ENCODE measurements at regions of chr5 and their contacts with region 1.

Region 1: GRCh38 chr5:123423278-123424149 is at the start of gene CEP120:
- DNase-seq: peak; percentile 99
- ATAC-seq: peak; percentile 97
- H3K4me3 Mint-ChIP-seq: no peak within 1 kb of the TSS
- H3K27ac Mint-ChIP-seq: no peak within 1 kb of the TSS
- H3K4me1 Mint-ChIP-seq: peaks cover 25% of the 10 kb centered on the region
- H3K27me3 Mint-ChIP-seq: no peaks in the 10 kb centered on the region
- total RNA-seq, gene CEP120: 29.4 to 32.1 TPM

Region 2: DNA sequence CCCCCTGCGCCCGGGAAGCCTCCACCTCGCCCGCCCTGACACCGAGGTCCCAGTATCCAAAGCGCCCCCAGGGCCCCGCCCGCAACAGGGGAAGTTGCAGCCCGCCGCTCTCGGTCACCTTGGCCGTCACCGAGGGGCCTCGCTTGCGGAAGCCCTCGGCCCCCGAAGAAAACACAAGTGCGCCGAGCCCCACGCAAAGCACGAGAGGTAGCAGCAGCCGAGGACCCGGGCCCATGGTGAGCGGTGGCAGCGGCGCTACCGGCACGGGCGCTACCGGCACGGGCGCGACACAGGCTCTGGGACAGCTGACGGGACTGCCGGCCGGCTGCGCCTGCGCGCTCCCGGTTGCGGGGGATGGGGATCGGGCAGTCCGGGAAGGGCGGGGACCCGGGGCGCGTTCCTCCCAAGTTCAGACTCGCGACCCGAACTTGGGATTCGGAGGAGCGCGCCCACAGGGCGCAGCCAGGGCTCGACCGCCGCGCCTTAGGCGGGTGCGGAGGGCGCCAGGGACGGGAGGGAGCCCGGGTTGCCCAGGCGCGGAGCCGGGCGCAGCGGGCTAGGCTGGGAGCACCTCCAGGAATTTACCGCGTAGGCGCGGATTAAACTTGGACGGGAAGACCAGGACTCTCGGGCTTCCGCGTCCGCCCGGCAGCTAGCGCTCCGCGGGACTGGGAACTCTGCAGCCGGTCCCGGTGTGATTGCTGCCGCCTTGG is 387.0 kb before region 1 on chr5 and contains the start of gene PPIC:
- CTCF ChIA-PET with region 1: no interaction called
- DNase-seq: no peak
- ATAC-seq: peak; percentile 64
- H3K4me3 Mint-ChIP-seq: peak within 1 kb of the TSS; percentile 53
- H3K27ac Mint-ChIP-seq: no peak within 1 kb of the TSS
- H3K4me1 Mint-ChIP-seq: peaks cover 11% of the 10 kb centered on the region
- H3K27me3 Mint-ChIP-seq: peaks cover 61% of the 10 kb centered on the region
- total RNA-seq, gene PPIC: not detected

Region 3: DNA sequence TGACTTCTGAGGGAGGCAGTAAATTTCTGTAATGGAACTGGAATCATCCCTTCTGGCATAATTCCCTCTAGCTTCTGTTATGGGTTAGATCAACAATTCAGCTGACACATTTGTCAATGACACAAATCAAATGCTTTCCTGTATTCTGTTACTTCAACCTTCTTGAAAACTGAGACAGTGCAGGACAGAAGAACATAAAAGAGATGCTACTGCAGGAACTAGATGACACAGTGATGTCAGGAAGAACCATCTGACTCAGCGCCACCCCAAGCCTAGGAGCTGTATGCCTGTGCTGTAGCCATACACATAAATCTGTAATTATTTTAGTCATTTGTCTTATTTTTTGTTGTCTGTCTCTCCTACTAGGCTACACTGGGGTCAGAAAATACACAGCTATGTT is 17.9 kb after region 1 on chr5:
- CTCF ChIA-PET with region 1: interaction called, 31 read pairs
- DNase-seq: peak; percentile 80
- ATAC-seq: peak; percentile 92
- H3K4me3 Mint-ChIP-seq: no peak overlapping the region
- H3K27ac Mint-ChIP-seq: peak overlapping the region; percentile 63
- H3K4me1 Mint-ChIP-seq: peaks cover 28% of the 10 kb centered on the region
- H3K27me3 Mint-ChIP-seq: peaks cover 5% of the 10 kb centered on the region

Region 4: DNA sequence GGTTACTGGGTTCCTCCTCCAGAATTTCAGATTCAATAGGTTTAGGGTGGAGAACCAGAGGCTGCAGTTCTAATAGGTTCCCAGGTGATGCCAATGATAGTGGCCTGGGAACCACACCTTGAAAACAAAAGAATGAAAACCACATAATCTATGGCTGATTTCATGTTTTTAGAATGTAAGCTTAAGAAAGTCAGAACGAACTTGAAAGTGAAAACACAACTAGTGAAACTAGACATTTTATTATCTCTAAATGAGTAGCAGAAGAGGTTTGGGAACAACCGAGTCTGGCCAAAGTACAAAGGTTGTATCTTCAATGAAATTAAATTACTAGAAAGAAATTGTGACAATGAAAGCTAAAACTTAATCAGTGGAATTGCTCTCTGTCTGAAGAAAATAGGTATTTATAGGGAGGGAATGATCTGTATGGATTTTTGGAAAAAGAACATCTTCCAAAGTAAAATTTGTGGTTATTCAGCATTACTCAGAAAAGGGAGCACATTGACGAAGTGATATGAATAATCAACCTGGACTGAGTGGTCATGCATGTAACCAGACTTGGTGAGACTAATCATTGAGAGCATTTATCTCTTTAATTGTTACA is 24.6 kb after region 1 on chr5:
- CTCF ChIA-PET with region 1: interaction called, 31 read pairs
- DNase-seq: no peak
- ATAC-seq: peak; percentile 89
- H3K4me3 Mint-ChIP-seq: peak overlapping the region; percentile 35
- H3K27ac Mint-ChIP-seq: peak overlapping the region; percentile 63
- H3K4me1 Mint-ChIP-seq: peaks cover 22% of the 10 kb centered on the region
- H3K27me3 Mint-ChIP-seq: peaks cover 18% of the 10 kb centered on the region

Region 5: GRCh38 chr5:123511648-123512605 is 88.4 kb after region 1 on chr5 and contains the start of gene CSNK1G3:
- CTCF ChIA-PET with region 1: interaction called, 42 read pairs
- DNase-seq: peak; percentile 98
- ATAC-seq: peak; percentile 96
- H3K4me3 Mint-ChIP-seq: peak within 1 kb of the TSS; percentile 84
- H3K27ac Mint-ChIP-seq: peak within 1 kb of the TSS; percentile 97
- H3K4me1 Mint-ChIP-seq: peaks cover 46% of the 10 kb centered on the region
- H3K27me3 Mint-ChIP-seq: peaks cover 5% of the 10 kb centered on the region
- total RNA-seq, gene CSNK1G3: 26.3 to 33.4 TPM

Region 6: GRCh38 chr5:123527190-123527589 is 103.7 kb after region 1 on chr5:
- CTCF ChIA-PET with region 1: no interaction called
- DNase-seq: no peak
- ATAC-seq: no peak
- H3K4me3 Mint-ChIP-seq: no peak overlapping the region
- H3K27ac Mint-ChIP-seq: no peak overlapping the region
- H3K4me1 Mint-ChIP-seq: peaks cover 14% of the 10 kb centered on the region
- H3K27me3 Mint-ChIP-seq: no peaks in the 10 kb centered on the region

Region 7: DNA sequence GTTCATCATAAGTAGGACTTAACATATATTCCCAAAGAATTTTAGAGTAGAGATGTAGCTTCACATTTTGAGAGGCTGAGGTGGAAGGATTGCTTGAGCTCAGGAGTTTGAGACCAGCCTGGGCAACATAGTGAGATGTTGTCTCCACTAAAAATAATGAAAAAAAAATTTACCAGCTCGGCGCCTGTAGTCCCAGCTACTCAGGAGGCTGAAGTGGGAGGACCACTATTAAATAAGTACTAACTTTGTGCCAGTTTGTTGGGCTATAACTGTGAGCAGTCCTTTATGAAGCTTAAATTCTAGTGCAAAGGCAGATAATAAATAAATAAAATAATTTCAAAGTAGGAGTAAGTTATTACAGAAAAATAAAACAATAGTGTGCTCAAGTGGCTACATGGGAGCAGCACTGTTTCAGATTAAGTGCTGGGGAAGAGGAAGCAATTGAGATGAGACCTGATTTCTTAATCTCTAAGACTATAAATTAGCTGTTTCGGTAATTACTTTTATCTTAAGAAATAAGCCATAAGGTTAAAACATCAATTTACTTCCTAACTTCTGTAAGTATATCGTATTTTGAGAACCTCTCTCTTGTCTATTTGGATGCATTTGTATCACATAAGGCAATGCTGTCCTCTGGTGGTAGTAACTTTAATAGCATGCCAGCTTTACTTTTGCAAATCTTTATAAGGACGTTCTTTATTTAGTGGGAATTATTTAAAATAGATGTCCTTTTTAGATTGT is 187.3 kb after region 1 on chr5:
- CTCF ChIA-PET with region 1: interaction called, 11 read pairs
- DNase-seq: no peak
- ATAC-seq: peak; percentile 45
- H3K4me3 Mint-ChIP-seq: no peak overlapping the region
- H3K27ac Mint-ChIP-seq: no peak overlapping the region
- H3K4me1 Mint-ChIP-seq: peaks cover 17% of the 10 kb centered on the region
- H3K27me3 Mint-ChIP-seq: no peaks in the 10 kb centered on the region

Region 8: GRCh38 chr5:123700398-123701287 is 277.1 kb after region 1 on chr5:
- CTCF ChIA-PET with region 1: no interaction called
- DNase-seq: no peak
- ATAC-seq: no peak
- H3K4me3 Mint-ChIP-seq: no peak overlapping the region
- H3K27ac Mint-ChIP-seq: no peak overlapping the region
- H3K4me1 Mint-ChIP-seq: no peaks in the 10 kb centered on the region
- H3K27me3 Mint-ChIP-seq: no peaks in the 10 kb centered on the region

Measured in activated CD8-positive, alpha-beta memory T cell treated with anti-CD3 and anti-CD28 coated beads, Interleukin-2, amount 10 ng/mL, durations not matched to agents 7 days and 5 days (primary cell).